ENCODE measurements at regions of chr6 and their contacts with region 1.

Region 1: GRCh38 chr6:105484238-105485161 is 81.6 kb upstream of the PREP start:
- DNase-seq: peak in 1 of 2 donors; percentile 62
- ATAC-seq: peak; percentile 70 to 77 (median 70)
- H3K4me3 ChIP-seq: no peak overlapping the region
- H3K4me3 Mint-ChIP-seq: peak overlapping the region; percentile 7
- H3K27ac ChIP-seq: peak overlapping the region; percentile 36
- H3K27ac Mint-ChIP-seq: peak overlapping the region; percentile 6 to 51
- H3K4me1 ChIP-seq: peaks cover 6% of the 10 kb centered on the region
- H3K4me1 Mint-ChIP-seq: peaks cover 28% of the 10 kb centered on the region in 2 donors
- H3K27me3 ChIP-seq: no peaks in the 10 kb centered on the region
- H3K27me3 Mint-ChIP-seq: no peaks in the 10 kb centered on the region
- CTCF ChIP-seq: peak; percentile 87

Region 2: DNA sequence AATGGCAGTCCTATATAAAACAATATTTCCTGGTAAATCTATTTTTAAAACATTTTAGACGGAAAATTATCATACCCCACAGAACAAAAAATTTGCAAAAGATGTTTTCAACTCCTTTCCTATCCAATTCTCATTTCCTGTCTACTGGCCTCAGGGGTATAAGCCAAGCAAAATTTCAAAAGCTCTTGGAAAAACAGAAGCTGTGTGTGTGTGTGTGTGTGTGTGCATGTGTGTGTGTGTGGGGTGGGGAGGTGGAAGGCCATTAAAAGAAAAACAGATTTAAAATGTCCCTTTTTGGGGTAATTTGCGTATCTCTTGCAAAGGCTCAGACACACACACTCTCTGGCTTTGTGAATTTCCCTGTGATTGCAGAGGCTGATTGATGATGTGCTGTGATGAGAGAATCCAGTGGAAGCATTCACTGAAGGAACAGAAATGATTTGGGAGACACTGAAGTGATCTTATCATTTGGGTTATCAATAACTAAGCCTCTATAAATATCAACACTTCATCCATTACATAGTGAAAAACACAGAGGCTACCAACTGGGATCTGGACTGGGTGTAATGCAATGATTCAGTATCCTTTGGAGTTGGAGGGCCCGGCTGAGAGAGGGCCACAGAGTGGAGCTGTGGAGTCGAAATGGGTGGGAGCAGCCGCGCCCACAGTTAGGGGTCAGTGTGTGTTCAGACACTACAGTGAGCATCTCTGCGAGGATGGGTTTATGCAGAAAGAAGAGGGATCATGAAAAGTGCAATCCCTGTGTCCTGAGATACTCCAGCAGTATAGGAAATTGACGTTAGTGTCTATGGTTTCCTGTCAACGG is 25.2 kb after region 1 on chr6:
- intact Hi-C with region 1: no loop called
- DNase-seq: no peak
- ATAC-seq: no peak
- H3K4me3 ChIP-seq: no peak overlapping the region
- H3K4me3 Mint-ChIP-seq: no peak overlapping the region
- H3K27ac ChIP-seq: no peak overlapping the region
- H3K27ac Mint-ChIP-seq: no peak overlapping the region
- H3K4me1 ChIP-seq: no peaks in the 10 kb centered on the region
- H3K4me1 Mint-ChIP-seq: no peaks in the 10 kb centered on the region
- H3K27me3 ChIP-seq: no peaks in the 10 kb centered on the region
- H3K27me3 Mint-ChIP-seq: peaks cover 0 to 12% of the 10 kb centered on the region in 2 donors
- CTCF ChIP-seq: no peak

Region 3: DNA sequence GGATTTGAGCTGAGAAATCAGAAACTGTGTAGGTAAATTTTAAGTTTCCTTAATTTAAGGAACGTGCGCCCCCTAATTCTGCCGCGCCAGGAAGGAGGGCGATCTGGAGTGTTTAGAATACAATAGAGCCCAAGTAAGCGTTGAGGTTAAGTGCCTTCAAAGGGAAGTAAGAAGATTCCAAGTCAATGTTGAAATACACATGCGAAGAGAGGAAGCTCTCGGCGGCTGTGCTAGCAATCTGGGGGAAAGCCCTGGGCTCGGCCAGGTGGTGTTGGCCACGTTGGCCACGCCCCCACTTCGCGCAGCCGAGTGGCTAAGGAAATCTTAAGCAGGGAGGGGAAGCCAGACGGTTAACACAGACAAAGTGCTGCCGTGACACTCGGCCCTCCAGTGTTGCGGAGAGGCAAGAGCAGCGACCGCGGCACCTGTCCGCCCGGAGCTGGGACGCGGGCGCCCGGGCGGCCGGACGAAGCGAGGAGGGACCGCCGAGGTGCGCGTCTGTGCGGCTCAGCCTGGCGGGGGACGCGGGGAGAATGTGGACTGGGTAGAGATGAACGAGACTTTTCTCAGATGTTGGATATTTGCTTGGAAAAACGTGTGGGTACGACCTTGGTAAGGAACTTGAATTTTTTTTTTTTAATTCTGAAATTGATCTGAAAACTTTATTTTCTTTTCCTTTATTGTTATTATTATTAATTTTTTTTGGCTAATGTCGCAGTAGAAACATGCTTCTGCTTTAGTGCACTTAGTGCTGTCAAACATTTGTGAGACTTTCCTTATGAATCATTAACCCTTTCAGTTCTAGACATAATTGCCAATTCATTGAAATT is 601.7 kb after region 1 on chr6 and contains the start of gene PRDM1:
- intact Hi-C with region 1: loop called (anchors 5 kb)
- DNase-seq: peak; percentile 75 to 93
- ATAC-seq: peak; percentile 90 to 97 (median 93)
- H3K4me3 ChIP-seq: peak within 1 kb of the TSS; percentile 54
- H3K4me3 Mint-ChIP-seq: peak within 1 kb of the TSS; percentile 94
- H3K27ac ChIP-seq: peak within 1 kb of the TSS; percentile 47
- H3K27ac Mint-ChIP-seq: peak within 1 kb of the TSS; percentile 88 to 97
- H3K4me1 ChIP-seq: peaks cover 32% of the 10 kb centered on the region
- H3K4me1 Mint-ChIP-seq: peaks cover 72 to 74% of the 10 kb centered on the region in 2 donors
- H3K27me3 ChIP-seq: no peaks in the 10 kb centered on the region
- H3K27me3 Mint-ChIP-seq: no peaks in the 10 kb centered on the region
- CTCF ChIP-seq: peak; percentile 15
- total RNA-seq, gene PRDM1: 165 to 180 (median 177) TPM

Measured in natural killer cell (primary cell).